ENCODE measurements at regions of chr2 and their contacts with region 1.

Region 1: DNA sequence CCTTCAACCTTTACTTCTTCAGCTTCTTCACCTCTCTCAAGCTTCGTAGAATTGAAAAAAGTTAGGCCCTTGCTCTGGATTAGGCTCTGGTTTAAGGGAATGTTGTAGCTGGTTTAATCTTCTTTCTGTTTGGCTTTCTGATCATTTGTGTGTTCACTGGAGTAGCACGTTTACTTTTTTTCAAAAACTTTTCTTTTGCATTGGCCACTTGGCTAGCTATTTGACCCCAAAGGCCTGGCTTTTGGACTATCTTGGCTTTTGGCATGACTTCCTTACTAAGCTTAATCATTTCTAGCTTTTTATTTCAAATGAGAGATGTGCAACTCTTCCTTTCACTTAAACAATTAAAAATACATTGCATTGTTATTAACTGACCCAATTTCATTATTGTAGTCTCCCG is 1154.8 kb upstream of the ZEB2 start:
- DNase-seq: no peak
- ATAC-seq: no peak
- H3K4me3 ChIP-seq: no peak overlapping the region
- H3K27ac ChIP-seq: no peak overlapping the region
- H3K4me1 ChIP-seq: no peaks in the 10 kb centered on the region
- H3K27me3 ChIP-seq: no peaks in the 10 kb centered on the region
- CTCF ChIP-seq: no peak
- EP300 ChIP-seq: no peak
- POLR2A ChIP-seq: no peak
- RAD21 ChIP-seq: no peak

Region 2: DNA sequence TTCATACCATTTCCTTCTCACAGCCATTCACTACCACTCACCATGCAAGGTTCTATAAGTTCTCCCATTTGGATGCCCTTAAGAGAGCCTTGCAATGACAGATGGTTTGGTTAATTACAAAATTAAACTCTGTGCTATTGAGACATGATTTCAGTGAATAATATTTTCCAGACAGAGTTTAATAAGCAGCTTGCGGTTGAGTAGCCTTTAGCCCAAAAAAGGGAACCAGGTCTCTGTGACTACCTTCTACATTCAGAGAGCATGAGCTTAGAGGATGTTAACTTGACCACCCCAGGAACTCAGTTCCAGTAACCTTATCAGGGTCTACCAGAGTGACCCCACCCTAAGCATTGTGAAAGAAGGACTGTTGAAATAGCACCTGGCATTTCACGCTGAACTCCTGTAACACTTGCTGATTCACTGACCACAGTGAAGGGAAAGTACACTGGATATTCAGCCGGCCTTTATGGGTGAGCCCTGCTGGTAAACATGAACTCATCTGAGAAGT is 18.3 kb after region 1 on chr2:
- CTCF ChIA-PET with region 1: no interaction called
- POLR2A ChIA-PET with region 1: no interaction called
- in situ Hi-C with region 1: no loop called
- intact Hi-C with region 1: no loop called
- DNase-seq: peak; percentile 65 to 97 (median 80)
- ATAC-seq: peak; percentile 98
- H3K4me3 ChIP-seq: no peak overlapping the region
- H3K27ac ChIP-seq: peak overlapping the region; percentile 82
- H3K4me1 ChIP-seq: peaks cover 0 to 19% of the 10 kb centered on the region in 2 experiments; a peak in 3 of 5 replicates
- H3K27me3 ChIP-seq: no peaks in the 10 kb centered on the region
- CTCF ChIP-seq: no peak
- EP300 ChIP-seq: peak; percentile 99
- POLR2A ChIP-seq: 0 out of 2 replicates have a peak, but pooled peaks have one; percentile 36
- RAD21 ChIP-seq: peak; percentile 8 to 53; a peak in 3 of 4 replicates

Region 3: DNA sequence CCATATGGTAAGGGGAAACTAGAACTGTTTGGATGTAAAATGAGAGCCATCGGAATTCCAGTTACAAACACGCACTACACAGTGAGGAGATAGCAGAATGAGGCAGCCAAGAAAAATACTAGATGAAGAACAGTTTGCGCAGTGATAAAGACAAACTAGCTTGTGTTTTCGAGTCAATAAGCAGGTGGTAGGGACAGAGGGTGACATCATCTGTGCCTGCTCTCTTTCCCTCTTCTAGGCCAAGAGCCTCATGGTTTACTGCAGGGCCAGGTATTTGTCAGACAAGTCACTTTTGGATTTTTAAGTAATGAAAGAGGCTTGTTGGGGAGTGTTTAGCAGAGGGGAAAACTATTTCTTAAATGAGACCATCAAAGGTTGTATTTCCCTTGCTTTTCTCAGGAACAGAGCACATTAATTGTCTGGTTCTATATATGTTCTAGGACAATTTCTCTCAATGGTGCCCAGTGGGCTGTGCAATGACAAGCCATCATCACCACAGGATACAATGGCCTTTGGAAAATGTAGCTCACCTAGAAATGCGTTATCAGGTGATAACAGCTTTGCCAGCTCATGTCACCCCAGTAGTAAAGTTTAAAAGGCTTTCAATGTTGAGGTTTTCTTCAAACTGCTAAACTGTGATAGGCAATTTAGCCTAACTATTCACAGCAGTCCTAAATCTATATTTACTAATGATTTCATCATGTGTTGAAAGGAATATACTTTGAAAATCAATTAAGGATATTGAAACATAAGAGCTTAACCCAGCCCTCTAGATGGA is 55.5 kb after region 1 on chr2:
- CTCF ChIA-PET with region 1: no interaction called
- POLR2A ChIA-PET with region 1: no interaction called
- in situ Hi-C with region 1: no loop called
- intact Hi-C with region 1: no loop called
- DNase-seq: peak; percentile 37 to 75 (median 55)
- ATAC-seq: peak; percentile 85
- H3K4me3 ChIP-seq: no peak overlapping the region
- H3K27ac ChIP-seq: peak overlapping the region; percentile 62
- H3K4me1 ChIP-seq: peaks cover 0 to 22% of the 10 kb centered on the region in 2 experiments; a peak in 2 of 5 replicates
- H3K27me3 ChIP-seq: no peaks in the 10 kb centered on the region
- CTCF ChIP-seq: no peak
- EP300 ChIP-seq: peak; percentile 68; the same call in 1 of the 2 replicates
- POLR2A ChIP-seq: no peak
- RAD21 ChIP-seq: no peak

Region 4: GRCh38 chr2:145744541-145745386 is 70.1 kb after region 1 on chr2:
- CTCF ChIA-PET with region 1: no interaction called
- POLR2A ChIA-PET with region 1: no interaction called
- in situ Hi-C with region 1: loop called (anchors 5 kb)
- intact Hi-C with region 1: no loop called
- DNase-seq: peak in 2 of 4 experiments; percentile 29 to 64
- ATAC-seq: peak; percentile 81
- H3K4me3 ChIP-seq: no peak overlapping the region
- H3K27ac ChIP-seq: no peak overlapping the region
- H3K4me1 ChIP-seq: peaks cover 0 to 22% of the 10 kb centered on the region in 2 experiments; a peak in 4 of 5 replicates
- H3K27me3 ChIP-seq: no peaks in the 10 kb centered on the region
- CTCF ChIP-seq: no peak
- EP300 ChIP-seq: peak; percentile 47; the same call in 1 of the 2 replicates
- POLR2A ChIP-seq: no peak
- RAD21 ChIP-seq: peak in 1 of 2 experiments; percentile 18; a peak in 1 of 4 replicates

Region 5: DNA sequence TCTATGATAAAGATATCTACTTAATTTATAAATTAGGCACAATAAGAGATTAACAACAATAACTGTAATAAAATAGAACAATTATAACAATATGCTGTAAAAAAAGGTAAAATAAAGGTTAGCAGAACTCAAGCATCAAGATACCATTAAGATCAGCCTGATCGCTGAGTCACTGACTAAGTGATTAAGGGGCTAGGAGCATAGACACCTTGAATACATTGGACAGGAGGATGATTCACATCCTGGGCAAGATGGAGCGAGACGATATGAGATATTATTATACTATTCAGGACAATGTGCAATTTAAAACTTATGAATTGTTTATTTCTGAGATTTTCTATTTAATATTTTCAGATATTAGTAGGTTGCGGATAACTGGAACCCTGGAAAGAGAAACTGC is 123.0 kb after region 1 on chr2:
- CTCF ChIA-PET with region 1: no interaction called
- POLR2A ChIA-PET with region 1: no interaction called
- in situ Hi-C with region 1: no loop called
- intact Hi-C with region 1: no loop called
- DNase-seq: no peak
- ATAC-seq: no peak
- H3K4me3 ChIP-seq: no peak overlapping the region
- H3K27ac ChIP-seq: no peak overlapping the region
- H3K4me1 ChIP-seq: no peaks in the 10 kb centered on the region
- H3K27me3 ChIP-seq: no peaks in the 10 kb centered on the region
- CTCF ChIP-seq: no peak
- EP300 ChIP-seq: no peak
- POLR2A ChIP-seq: no peak
- RAD21 ChIP-seq: no peak